Heart left ventricle (tissue), 16 donors: ENCODE measurements at regions of chr1 and their contacts with region 1.

Region 1: DNA sequence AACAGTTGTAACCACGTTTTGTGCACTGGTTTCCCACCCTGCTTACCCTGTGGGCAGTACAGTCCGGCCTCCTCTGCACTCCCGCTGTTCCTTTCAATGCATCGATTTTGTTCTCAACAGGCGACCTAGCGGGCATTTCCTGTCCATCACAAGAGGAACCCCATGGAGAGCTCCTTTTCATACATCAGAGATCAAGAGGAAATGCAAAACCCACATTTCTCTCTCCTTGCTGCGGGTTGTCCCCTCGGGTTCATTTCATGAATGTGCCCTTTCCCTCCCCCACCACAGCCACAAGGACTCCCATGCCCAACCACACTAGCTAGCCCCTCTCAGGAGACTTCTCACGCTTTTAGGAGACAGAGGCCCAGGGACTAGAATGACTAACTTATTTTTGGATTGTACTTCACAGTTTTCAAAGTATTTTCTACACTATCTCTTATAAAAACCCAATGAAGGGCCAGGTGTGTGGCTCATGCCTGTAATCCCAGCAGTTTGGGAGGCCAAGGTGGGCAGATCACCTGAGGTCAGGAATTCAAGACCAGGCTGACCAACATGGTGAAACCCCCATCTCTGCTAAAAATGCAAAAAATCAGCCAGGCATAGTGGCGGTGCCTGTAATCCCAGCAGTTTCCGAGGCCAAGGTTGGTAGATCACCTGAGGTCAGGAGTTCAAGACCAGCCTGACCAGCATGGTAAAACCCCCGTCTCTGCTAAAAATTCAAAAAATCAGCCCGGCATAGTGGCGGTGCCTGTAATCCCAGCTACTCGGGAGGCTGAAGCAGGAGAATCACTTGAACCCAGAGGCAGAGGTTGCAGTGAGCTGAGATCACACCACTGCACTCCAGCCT is 18.4 kb downstream of the ATP1A4 start:
- DNase-seq: no peak
- ATAC-seq: no peak
- H3K4me3 ChIP-seq: no peak overlapping the region
- H3K27ac ChIP-seq: no peak overlapping the region
- H3K4me1 ChIP-seq: no peaks in the 10 kb centered on the region
- H3K27me3 ChIP-seq: peaks cover 0 to 4% (median 0%) of the 10 kb centered on the region in 9 donors
- CTCF ChIP-seq: no peak
- POLR2A ChIP-seq: no peak

Region 2: GRCh38 chr1:160144921-160145320 is 24.9 kb before region 1 on chr1:
- intact Hi-C with region 1: loop called in 1 of 10 experiments (anchors 1 kb)
- DNase-seq: no peak
- ATAC-seq: peak in 2 of 4 donors; percentile 10 to 21
- H3K4me3 ChIP-seq: no peak overlapping the region
- H3K27ac ChIP-seq: no peak overlapping the region
- H3K4me1 ChIP-seq: peaks cover 0 to 17% (median 0%) of the 10 kb centered on the region in 12 donors
- H3K27me3 ChIP-seq: no peaks in the 10 kb centered on the region
- CTCF ChIP-seq: no peak
- POLR2A ChIP-seq: no peak